GM12878 (cell line): ENCODE measurements at regions of chr10 and their contacts with region 1.

Region 1: GRCh38 chr10:74977913-74978847 is 133.3 kb upstream of the SAMD8 start:
- DNase-seq: peak; percentile 86
- ATAC-seq: peak; percentile 92
- H3K4me3 ChIP-seq: peak overlapping the region; percentile 41
- H3K27ac ChIP-seq: peak overlapping the region; percentile 81
- H3K4me1 ChIP-seq: peaks cover 42% of the 10 kb centered on the region
- H3K27me3 ChIP-seq: no peaks in the 10 kb centered on the region
- CTCF ChIP-seq: no peak
- EP300 ChIP-seq: peak; percentile 98 to 99
- POLR2A ChIP-seq: no peak
- RAD21 ChIP-seq: peak; percentile 20; the same call in 1 of the 2 replicates

Region 2: DNA sequence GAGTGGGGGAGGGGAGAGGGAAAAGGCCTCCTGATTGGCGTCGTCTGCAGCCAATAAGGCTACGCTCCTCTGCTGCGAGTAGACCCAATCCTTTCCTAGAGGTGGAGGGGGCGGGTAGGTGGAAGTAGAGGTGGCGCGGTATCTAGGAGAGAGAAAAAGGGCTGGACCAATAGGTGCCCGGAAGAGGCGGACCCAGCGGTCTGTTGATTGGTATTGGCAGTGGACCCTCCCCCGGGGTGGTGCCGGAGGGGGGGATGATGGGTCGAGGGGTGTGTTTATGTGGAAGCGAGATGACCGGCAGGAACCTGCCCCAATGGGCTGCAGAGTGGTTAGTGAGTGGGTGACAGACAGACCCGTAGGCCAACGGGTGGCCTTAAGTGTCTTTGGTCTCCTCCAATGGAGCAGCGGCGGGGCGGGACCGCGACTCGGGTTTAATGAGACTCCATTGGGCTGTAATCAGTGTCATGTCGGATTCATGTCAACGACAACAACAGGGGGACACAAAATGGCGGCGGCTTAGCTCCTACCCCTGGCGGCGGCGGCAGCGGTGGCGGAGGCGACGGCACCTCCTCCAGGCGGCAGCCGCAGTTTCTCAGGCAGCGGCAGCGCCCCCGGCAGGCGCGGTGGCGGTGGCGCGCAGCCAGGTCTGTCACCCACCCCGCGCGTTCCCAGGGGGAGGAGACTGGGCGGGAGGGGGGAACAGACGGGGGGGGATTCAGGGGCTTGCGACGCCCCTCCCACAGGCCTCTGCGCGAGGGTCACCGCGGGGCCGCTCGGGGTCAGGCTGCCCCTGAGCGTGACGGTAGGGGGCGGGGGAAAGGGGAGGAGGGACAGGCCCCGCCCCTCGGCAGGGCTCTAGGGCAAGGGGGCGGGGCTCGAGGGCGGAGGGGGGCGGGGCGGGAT is 151.8 kb before region 1 on chr10 and contains the start of gene KAT6B:
- CTCF ChIA-PET with region 1: interaction called, 8 read pairs
- POLR2A ChIA-PET with region 1: interaction called, 4 read pairs
- RAD21 ChIA-PET with region 1: interaction called, 23 read pairs
- SMC1A ChIA-PET with region 1: interaction called, 11 read pairs
- in situ Hi-C with region 1: no loop called
- intact Hi-C with region 1: no loop called
- DNase-seq: peak; percentile 100
- ATAC-seq: peak; percentile 90
- H3K4me3 ChIP-seq: peak within 1 kb of the TSS; percentile 93
- H3K27ac ChIP-seq: peak within 1 kb of the TSS; percentile 91
- H3K4me1 ChIP-seq: peaks cover 9% of the 10 kb centered on the region; the same call in 1 of the 2 replicates
- H3K27me3 ChIP-seq: no peaks in the 10 kb centered on the region
- CTCF ChIP-seq: peak; percentile 11 to 41 (median 17); a peak in 3 of 6 replicates
- EP300 ChIP-seq: 0 out of 4 replicates have a peak, but pooled peaks of 1 of the 2 experiments have one; percentile 34
- POLR2A ChIP-seq: peak; percentile 87
- RAD21 ChIP-seq: no peak; the same call in 1 of the 2 replicates
- polyA plus RNA-seq, gene KAT6B: 2.7 to 5.3 TPM

Region 3: DNA sequence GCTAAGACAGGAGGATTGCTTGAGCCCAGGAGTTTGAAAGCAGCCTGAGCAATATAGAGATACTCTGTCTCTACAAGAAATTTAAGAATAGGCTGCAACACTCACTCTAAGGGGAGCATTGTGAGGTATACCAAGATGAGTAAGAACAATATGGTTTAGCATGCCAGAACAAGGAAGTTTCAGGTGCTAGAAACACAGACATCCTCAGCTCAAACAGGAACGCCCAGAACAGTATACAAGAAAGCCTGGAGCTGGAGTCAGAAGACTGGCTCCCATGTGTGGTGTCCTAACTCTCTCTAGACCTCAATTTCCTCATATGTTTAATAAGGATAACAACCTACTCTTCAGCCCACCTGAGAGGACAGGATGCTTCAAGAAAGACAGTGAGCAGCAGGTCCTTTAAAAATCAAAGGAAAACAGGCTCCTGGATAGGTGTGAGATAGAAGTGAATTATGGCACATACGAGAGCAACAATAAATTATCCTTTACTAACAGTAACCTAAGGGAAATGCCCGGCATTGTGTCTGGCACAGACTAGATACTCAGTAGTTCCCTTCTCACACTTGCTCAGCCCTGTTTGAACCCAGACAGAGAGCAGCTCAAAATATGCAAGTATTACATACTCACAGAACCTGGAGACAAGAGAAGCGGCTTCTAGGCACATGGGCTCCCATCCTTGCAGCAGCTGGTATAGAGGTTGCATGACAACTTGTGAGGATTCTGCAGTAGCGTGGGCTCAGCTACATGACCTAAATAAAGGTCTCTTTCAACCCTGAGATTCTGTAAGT is 106.4 kb before region 1 on chr10:
- CTCF ChIA-PET with region 1: interaction called, 3 read pairs
- POLR2A ChIA-PET with region 1: interaction called, 3 read pairs
- RAD21 ChIA-PET with region 1: interaction called, 7 read pairs
- SMC1A ChIA-PET with region 1: interaction called, 11 read pairs
- in situ Hi-C with region 1: no loop called
- intact Hi-C with region 1: no loop called
- DNase-seq: peak; percentile 72
- ATAC-seq: peak; percentile 96
- H3K4me3 ChIP-seq: peak overlapping the region; percentile 37; the same call in 1 of the 2 replicates
- H3K27ac ChIP-seq: peak overlapping the region; percentile 61
- H3K4me1 ChIP-seq: peaks cover 32% of the 10 kb centered on the region
- H3K27me3 ChIP-seq: no peaks in the 10 kb centered on the region
- CTCF ChIP-seq: no peak
- EP300 ChIP-seq: peak in 1 of 2 experiments; percentile 56; a peak in 1 of 4 replicates
- POLR2A ChIP-seq: no peak
- RAD21 ChIP-seq: no peak; the same call in 1 of the 2 replicates

Region 4: DNA sequence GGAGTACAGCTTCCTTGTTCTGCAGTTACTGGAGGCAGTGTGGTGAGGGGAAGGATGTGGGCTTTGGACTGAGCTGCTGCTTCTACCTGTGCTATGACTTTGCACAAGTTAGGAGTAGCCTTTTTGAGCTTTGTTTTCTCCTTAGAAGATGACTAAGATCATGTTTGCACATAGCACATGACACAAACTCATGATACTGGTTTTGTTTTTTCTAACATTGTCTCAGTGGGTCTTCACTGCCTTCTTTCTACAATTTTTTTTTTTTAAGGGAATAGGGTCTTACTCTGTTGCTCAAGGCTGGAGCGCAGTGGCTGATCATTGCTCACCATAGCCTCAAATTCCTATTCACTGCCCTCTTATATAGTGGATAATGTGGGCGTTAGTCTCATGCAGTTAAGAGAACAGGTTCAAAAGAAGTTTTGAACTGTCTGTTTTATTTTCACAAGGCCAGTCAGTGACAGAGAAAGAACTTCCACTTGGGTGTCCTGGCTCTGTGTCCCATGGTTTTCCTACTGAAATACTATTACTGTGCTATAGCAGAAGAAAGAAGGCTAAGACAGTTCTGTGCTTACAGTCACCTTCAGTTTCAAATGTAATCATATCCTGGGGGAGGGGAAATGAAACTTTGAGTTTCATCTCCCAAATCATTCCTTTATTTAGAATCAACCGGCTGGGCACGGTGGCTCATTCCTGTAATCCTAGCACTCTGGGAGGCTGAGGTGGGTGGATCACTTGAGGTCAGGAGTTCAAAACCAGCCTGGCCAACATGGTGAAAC is 79.8 kb before region 1 on chr10:
- CTCF ChIA-PET with region 1: interaction called, 6 read pairs
- POLR2A ChIA-PET with region 1: interaction called, 5 read pairs
- RAD21 ChIA-PET with region 1: interaction called, 21 read pairs
- SMC1A ChIA-PET with region 1: interaction called, 29 read pairs
- in situ Hi-C with region 1: no loop called
- intact Hi-C with region 1: no loop called
- DNase-seq: peak; percentile 67
- ATAC-seq: peak; percentile 80
- H3K4me3 ChIP-seq: no peak overlapping the region; the same call in 1 of the 2 replicates
- H3K27ac ChIP-seq: peak overlapping the region; percentile 87
- H3K4me1 ChIP-seq: peaks cover 42% of the 10 kb centered on the region
- H3K27me3 ChIP-seq: no peaks in the 10 kb centered on the region
- CTCF ChIP-seq: no peak
- EP300 ChIP-seq: no peak; a peak in 2 of 4 replicates
- POLR2A ChIP-seq: peak; percentile 48
- RAD21 ChIP-seq: no peak

Region 5: DNA sequence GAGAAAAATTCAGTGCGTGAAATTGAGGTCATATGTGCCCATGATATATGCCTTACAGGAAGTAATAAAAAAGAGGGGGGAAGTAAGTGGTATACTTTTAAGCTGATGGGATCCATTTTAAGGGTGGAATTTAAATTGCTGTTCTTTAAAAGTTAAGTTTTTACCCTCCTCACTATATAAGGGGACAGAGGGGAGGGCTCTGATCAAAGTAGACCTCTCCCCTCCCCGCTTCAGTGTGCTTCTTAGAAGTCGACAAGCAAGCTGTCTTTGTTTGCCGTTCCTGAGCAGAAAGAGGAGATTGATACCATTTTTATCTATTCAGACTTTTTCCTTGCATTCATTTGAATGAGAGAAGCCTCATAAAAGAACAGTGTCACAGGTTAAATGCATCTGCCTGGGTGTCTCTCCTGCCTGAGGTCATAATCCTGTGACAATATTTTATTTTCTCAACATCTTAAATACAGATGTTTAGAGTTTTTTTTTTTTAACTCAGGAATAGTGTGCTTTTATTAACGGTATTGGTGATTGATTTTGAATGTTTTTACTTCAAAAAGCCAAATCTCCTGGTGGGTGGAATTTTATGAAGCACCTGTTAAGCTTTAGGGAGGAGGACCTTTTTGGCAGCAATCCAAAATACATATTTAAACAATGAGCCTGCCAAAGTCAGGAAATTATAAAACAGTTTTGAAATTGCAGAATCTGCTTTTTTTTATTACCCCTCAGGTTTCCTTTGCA is 10.1 kb before region 1 on chr10:
- CTCF ChIA-PET with region 1: interaction called, 3 read pairs
- POLR2A ChIA-PET with region 1: interaction called, 5 read pairs
- RAD21 ChIA-PET with region 1: interaction called, 8 read pairs
- SMC1A ChIA-PET with region 1: interaction called, 82 read pairs
- in situ Hi-C with region 1: no loop called
- intact Hi-C with region 1: no loop called
- DNase-seq: no peak
- ATAC-seq: no peak
- H3K4me3 ChIP-seq: no peak overlapping the region
- H3K27ac ChIP-seq: no peak overlapping the region
- H3K4me1 ChIP-seq: peaks cover 7% of the 10 kb centered on the region
- H3K27me3 ChIP-seq: no peaks in the 10 kb centered on the region
- CTCF ChIP-seq: no peak
- EP300 ChIP-seq: no peak
- POLR2A ChIP-seq: no peak
- RAD21 ChIP-seq: no peak

Region 6: DNA sequence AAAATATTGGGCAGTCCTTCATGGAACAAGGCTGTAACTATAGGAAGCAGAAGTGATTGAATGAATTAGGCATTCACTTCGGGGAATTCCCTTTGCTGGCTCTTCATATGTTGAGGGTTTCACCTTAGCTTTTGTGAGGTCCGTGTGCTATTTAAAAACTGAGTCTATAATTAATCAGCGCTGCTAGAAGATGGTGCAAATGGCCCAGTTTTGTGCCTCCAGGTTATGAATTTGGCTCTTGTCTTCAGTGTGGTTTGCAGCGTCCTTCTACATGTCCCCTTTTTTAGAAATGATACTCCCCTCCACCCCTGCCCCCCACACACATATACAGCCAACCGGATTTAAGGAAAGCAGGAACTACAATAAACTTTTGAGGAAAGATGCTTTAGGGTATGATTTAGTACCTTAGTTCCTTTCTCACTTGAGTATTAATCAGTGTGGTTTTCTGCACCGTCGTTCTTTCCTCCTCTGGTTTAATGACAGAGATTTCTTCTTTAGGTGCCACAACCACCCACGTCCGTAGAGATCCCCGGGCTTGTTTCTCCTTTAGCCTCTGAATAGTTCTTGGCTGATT is 22.7 kb after region 1 on chr10:
- CTCF ChIA-PET with region 1: interaction called, 24 read pairs
- POLR2A ChIA-PET with region 1: interaction called, 5 read pairs
- RAD21 ChIA-PET with region 1: interaction called, 25 read pairs
- SMC1A ChIA-PET with region 1: interaction called, 553 read pairs
- in situ Hi-C with region 1: no loop called
- intact Hi-C with region 1: no loop called
- DNase-seq: no peak
- ATAC-seq: peak; percentile 93
- H3K4me3 ChIP-seq: peak overlapping the region; percentile 46
- H3K27ac ChIP-seq: peak overlapping the region; percentile 82
- H3K4me1 ChIP-seq: peaks cover 21% of the 10 kb centered on the region
- H3K27me3 ChIP-seq: no peaks in the 10 kb centered on the region
- CTCF ChIP-seq: no peak
- EP300 ChIP-seq: no peak; a peak in 1 of 4 replicates
- POLR2A ChIP-seq: no peak
- RAD21 ChIP-seq: no peak

Region 7: DNA sequence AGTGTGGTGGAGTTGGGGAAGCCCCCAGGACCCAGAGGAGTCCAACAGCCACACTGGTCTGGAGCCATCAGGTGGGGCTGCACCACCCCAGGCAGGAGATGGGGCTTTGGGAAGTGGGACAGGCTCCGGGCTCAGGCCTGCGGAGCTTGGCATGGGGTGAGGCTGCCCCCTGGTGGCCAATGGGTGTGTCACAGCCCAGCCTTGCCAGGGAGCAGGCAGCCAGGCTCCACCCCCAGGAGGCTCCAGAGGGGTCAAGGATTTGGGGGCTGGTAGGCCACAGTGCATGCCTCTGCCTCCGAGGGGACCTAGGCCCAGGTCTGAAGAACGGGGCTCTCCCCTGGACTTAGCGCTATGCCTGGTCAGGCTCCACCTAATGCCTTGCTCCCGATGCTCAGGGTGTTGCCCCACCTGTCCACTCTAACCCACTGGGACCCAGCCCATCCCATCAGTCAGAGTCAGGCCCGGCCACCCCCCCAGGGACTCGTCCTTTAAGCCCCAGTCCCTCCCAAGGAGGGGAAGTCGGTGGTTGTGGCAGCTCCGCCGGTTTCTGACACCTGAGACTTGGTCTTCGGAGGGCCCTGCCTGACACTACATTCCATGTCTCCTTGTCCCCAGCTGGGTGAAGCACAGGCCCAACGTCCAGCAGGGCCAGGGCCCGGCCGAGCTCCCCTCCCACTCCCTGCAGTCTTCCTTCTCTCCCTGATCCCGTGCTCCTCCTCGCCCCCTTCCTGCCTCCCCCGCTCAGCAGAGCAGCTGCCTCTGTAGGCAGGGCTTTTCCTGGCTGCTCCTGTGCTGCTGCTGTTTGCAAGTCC is 122.0 kb after region 1 on chr10:
- CTCF ChIA-PET with region 1: interaction called, 3 read pairs
- POLR2A ChIA-PET with region 1: no interaction called
- RAD21 ChIA-PET with region 1: interaction called, 10 read pairs
- SMC1A ChIA-PET with region 1: interaction called, 5 read pairs
- in situ Hi-C with region 1: no loop called
- intact Hi-C with region 1: no loop called
- DNase-seq: no peak
- ATAC-seq: peak; percentile 98
- H3K4me3 ChIP-seq: no peak overlapping the region
- H3K27ac ChIP-seq: no peak overlapping the region
- H3K4me1 ChIP-seq: no peaks in the 10 kb centered on the region; the same call in 1 of the 2 replicates
- H3K27me3 ChIP-seq: no peaks in the 10 kb centered on the region
- CTCF ChIP-seq: peak; percentile 94 to 99 (median 98)
- EP300 ChIP-seq: no peak
- POLR2A ChIP-seq: no peak
- RAD21 ChIP-seq: peak; percentile 98